Endothelial cell of umbilical vein (primary cell): ENCODE measurements at regions of chr3 and their contacts with region 1.

Region 1: DNA sequence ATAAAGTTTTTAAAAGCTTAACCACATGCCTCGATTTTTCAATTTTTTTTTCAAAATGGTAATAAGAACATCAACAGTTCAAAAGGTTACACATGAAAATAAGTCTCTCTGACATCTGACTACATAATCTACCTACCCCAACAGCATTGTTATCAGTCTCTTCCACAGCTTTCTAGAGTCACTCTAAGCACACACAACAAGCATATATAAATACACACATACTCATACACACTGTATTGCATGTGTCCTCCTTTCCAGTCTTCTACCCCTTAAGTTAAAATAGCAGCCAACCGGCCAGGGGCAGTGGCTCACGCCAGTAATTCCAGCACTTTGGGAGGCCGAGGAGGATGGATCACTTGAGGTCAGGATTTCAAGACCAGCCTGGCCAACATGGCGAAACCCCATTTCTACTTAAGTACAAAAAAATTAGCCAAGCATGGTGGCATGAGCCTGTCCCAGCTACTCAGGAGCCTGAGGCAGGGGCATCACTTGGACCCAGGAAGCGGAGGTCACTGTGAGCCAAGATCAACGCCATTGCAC is 12.2 kb downstream of the TBL1XR1 start:
- DNase-seq: no peak
- H3K4me3 ChIP-seq: no peak overlapping the region
- H3K27ac ChIP-seq: no peak overlapping the region
- H3K4me1 ChIP-seq: no peaks in the 10 kb centered on the region
- H3K27me3 ChIP-seq: no peaks in the 10 kb centered on the region
- CTCF ChIP-seq: no peak
- POLR2A ChIP-seq: no peak

Region 2: GRCh38 chr3:177150970-177151627 is 34.0 kb before region 1 on chr3:
- CTCF ChIA-PET with region 1: no interaction called
- POLR2A ChIA-PET with region 1: no interaction called
- dilution Hi-C with region 1: no loop called
- intact Hi-C with region 1: no loop called
- DNase-seq: peak; percentile 76
- H3K4me3 ChIP-seq: no peak overlapping the region
- H3K27ac ChIP-seq: no peak overlapping the region
- H3K4me1 ChIP-seq: peaks cover 11% of the 10 kb centered on the region
- H3K27me3 ChIP-seq: no peaks in the 10 kb centered on the region
- CTCF ChIP-seq: no peak
- POLR2A ChIP-seq: no peak

Region 3: DNA sequence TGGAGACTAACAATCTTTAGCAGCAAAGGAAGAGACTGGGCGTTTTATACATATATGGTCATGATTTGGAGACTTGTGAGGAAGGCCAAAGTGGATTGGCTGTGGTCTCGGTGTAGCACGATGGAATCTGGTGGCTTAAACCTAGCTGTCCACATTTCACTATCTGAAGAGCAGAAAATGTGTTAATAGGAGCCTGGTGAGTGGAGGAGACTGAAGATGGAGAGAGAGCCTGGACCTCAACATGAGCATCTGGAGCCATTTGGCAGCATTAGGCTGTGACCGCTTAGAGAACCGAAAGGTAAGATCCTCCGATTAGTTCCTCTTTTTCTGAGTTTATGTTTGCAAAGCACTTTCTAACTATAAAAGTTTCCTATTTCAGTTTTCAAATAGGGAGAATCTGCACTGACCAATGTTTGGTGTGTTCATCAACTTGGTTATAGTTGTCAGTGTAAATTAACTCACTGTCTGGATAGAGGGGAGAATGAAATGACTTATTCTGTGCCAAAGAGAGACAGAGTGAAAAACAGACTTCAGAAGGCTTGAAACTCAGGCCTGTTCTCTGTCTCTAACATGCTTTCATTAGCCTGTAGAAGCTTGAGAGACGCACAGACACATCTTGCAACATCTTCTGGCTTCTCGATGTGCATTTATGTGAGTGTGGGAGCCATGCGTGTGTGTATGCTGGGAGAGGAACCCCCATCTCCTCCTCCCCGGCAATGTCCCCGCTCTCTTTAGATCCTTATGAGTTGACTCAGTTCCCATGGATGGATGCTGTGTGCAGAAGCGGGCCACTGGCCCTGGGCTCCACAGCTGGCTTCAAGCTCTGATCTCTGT is 256.9 kb after region 1 on chr3:
- CTCF ChIA-PET with region 1: no interaction called
- POLR2A ChIA-PET with region 1: no interaction called
- dilution Hi-C with region 1: no loop called
- intact Hi-C with region 1: loop called (anchors 5 kb)
- DNase-seq: no peak
- H3K4me3 ChIP-seq: no peak overlapping the region
- H3K27ac ChIP-seq: no peak overlapping the region
- H3K4me1 ChIP-seq: peaks cover 5% of the 10 kb centered on the region
- H3K27me3 ChIP-seq: no peaks in the 10 kb centered on the region
- CTCF ChIP-seq: no peak
- POLR2A ChIP-seq: no peak